ENCODE measurements at regions of chr14 and their contacts with region 1.

Region 1: DNA sequence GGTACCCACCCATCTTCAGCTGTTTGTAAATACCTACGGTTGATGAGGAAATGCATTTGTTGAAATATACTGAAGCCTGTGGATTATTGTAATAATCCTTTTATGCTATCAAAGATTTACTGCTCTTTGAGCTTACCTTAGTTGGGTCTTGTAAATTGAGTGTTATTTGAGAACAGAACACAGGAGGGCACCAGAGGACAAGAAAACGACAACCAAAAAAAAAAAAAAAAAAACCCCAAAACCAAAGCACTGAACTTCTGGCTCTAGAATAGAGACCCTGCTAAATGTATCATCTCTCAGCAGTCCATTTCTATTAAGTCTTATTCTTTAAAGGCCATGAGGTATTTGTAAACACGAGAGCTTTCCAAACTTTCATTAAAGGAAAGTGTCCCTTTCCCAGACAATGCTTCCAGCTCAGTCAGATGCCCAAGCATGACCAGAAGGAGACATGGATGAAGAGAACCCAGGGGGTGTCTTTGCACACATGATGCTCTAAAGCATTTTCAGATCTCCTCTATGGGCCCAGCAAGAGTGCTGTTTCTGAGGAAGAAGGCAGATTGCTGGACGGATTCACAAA is 763.9 kb downstream of the NRXN3 start:
- DNase-seq: peak; percentile 45
- ATAC-seq: no peak
- H3K4me3 ChIP-seq: no peak overlapping the region
- H3K27ac ChIP-seq: no peak overlapping the region
- H3K4me1 ChIP-seq: no peaks in the 10 kb centered on the region
- H3K27me3 ChIP-seq: no peaks in the 10 kb centered on the region
- CTCF ChIP-seq: peak; percentile 73

Region 2: DNA sequence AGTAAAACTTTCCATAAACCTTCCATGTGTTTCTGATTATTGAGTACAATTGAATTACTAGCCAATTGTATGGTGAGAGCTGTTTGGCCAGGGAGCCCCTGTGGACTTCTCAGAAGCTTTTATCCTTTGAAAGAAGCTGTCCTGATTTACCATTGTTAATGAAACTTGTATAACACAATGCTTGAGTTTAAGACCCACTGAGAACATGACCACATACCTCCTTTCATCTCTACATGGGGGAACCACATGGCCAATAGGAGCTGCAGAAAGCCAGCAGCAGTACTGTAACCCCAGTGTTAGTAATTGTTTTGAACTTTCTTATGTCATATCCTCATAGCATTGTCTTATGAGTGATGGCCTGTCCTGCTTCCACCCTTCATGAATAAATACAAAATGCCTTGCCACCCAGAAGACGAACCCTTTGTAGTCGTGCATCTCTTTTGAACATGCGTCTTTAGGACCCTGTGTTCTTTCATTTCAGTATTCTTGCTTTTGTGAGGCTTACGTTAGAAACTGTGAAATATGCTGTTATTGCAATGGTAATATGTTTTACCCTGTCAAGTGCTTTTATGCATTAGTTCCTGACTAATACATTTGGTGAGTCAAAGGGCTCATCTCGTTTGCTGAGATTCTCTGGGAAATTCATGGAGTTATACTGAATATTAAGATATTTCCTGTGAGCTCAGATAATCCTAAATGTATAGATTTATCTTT is 51.8 kb after region 1 on chr14:
- CTCF ChIA-PET with region 1: interaction called, 23 read pairs
- POLR2A ChIA-PET with region 1: no interaction called
- intact Hi-C with region 1: no loop called
- DNase-seq: no peak
- ATAC-seq: no peak
- H3K4me3 ChIP-seq: no peak overlapping the region
- H3K27ac ChIP-seq: no peak overlapping the region
- H3K4me1 ChIP-seq: no peaks in the 10 kb centered on the region
- H3K27me3 ChIP-seq: no peaks in the 10 kb centered on the region; the same call in 1 of the 2 replicates
- CTCF ChIP-seq: no peak

Region 3: GRCh38 chr14:79324788-79325467 is 390.9 kb after region 1 on chr14:
- CTCF ChIA-PET with region 1: interaction called, 22 read pairs
- POLR2A ChIA-PET with region 1: no interaction called
- intact Hi-C with region 1: no loop called
- DNase-seq: peak; percentile 71
- ATAC-seq: peak; percentile 95
- H3K4me3 ChIP-seq: no peak overlapping the region
- H3K27ac ChIP-seq: no peak overlapping the region
- H3K4me1 ChIP-seq: peaks cover 14% of the 10 kb centered on the region
- H3K27me3 ChIP-seq: no peaks in the 10 kb centered on the region
- CTCF ChIP-seq: no peak

Region 4: GRCh38 chr14:80003138-80003537 is 1069.1 kb after region 1 on chr14:
- CTCF ChIA-PET with region 1: interaction called, 19 read pairs
- POLR2A ChIA-PET with region 1: no interaction called
- intact Hi-C with region 1: no loop called
- DNase-seq: peak; percentile 89
- ATAC-seq: peak; percentile 90
- H3K4me3 ChIP-seq: no peak overlapping the region; the same call in 1 of the 2 replicates
- H3K27ac ChIP-seq: peak overlapping the region; percentile 73
- H3K4me1 ChIP-seq: peaks cover 19% of the 10 kb centered on the region
- H3K27me3 ChIP-seq: no peaks in the 10 kb centered on the region
- CTCF ChIP-seq: no peak

Region 5: DNA sequence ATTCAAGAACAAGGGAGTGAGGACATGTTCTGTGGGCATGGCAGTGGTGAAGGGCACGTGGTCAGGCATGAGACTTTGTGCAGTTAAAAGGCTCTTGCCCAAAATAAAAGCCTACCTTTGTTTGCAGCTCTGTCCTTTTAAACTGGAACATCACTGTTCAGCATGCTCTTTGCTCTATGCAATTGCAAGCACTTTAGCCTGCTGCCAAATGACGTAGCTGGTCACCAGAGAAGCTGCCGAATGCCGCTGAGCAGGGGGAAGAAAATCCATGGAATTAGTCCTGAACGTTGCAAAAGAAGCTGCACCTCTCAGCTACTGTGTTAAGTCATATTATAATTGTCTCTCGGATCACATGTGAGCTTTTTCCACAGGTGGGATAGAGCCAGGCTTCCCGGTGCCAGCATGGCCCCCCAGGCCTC is 1453.5 kb after region 1 on chr14:
- CTCF ChIA-PET with region 1: interaction called, 11 read pairs
- POLR2A ChIA-PET with region 1: no interaction called
- intact Hi-C with region 1: no loop called
- DNase-seq: no peak
- ATAC-seq: no peak
- H3K4me3 ChIP-seq: no peak overlapping the region
- H3K27ac ChIP-seq: no peak overlapping the region
- H3K4me1 ChIP-seq: peaks cover 47% of the 10 kb centered on the region
- H3K27me3 ChIP-seq: no peaks in the 10 kb centered on the region
- CTCF ChIP-seq: no peak